MCF 10A (cell line): ENCODE measurements at regions of chr6 and their contacts with region 1.

Region 1: DNA sequence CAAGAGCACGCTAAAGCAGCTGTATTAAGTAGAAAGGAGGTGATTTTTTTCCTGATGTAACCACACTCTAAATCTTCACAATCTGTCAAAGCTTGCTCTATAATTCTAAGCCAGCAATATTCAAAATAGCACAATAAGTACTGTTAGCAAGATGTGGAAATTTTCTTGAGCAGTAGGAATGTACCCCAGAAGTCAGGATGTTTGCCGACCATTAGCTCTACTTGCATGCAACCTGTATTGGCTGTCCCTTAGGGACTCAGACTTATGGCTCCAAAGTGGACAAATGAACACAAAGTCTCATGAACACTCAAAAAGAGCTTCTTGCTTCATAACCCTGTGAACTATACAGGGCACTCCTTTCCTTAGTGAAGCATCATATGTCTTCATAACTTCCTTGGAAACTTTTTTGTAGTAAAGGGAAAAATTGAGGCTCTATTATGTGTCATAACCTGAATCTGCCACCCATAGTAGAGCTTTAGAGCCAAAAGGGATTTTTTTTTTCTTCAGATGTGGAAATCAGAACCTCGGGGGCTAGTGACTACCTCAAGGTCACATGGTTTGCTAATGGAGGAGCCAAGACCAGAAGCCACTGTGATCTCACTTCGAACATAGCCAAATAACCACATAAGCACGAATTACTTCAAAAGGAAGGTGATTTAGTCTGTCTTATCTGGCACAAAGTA is 54.5 kb downstream of the ADGRG6 start:
- DNase-seq: peak; percentile 87
- H3K4me3 Mint-ChIP-seq: peak overlapping the region; percentile 30
- H3K27ac Mint-ChIP-seq: peak overlapping the region; percentile 73
- H3K4me1 Mint-ChIP-seq: peaks cover 25% of the 10 kb centered on the region
- H3K27me3 Mint-ChIP-seq: no peaks in the 10 kb centered on the region
- CTCF ChIP-seq: no peak

Region 2: DNA sequence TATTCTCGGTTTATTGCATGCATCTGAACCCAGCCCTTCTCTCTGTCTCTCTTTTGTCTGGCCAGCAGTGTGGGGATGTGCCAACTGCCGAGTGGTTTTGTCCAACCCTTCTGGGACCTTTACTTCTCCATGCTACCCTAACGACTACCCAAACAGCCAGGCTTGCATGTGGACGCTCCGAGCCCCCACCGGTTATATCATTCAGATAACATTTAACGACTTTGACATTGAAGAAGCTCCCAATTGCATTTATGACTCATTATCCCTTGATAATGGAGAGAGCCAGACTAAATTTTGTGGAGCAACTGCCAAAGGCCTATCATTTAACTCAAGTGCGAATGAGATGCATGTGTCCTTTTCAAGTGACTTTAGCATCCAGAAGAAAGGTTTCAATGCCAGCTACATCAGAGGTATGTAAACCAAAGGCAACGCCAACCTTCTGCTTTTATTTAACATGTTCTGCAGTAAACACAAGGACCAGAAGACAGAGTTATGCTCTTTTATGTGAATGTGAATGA is 11.2 kb after region 1 on chr6:
- CTCF ChIA-PET with region 1: interaction called, 3 read pairs
- POLR2A ChIA-PET with region 1: interaction called, 12 read pairs
- intact Hi-C with region 1: no loop called
- DNase-seq: no peak
- H3K4me3 Mint-ChIP-seq: no peak overlapping the region
- H3K27ac Mint-ChIP-seq: no peak overlapping the region
- H3K4me1 Mint-ChIP-seq: peaks cover 12% of the 10 kb centered on the region
- H3K27me3 Mint-ChIP-seq: no peaks in the 10 kb centered on the region
- CTCF ChIP-seq: no peak